Esophagus muscularis mucosa (tissue), 4 donors: ENCODE measurements at regions of chr2 and their contacts with region 1.

Region 1: GRCh38 chr2:169877398-169877797 is 50.1 kb downstream of the UBR3 start:
- DNase-seq: no peak
- H3K4me3 ChIP-seq: no peak overlapping the region
- H3K27ac ChIP-seq: no peak overlapping the region
- H3K4me1 ChIP-seq: no peaks in the 10 kb centered on the region
- H3K27me3 ChIP-seq: no peaks in the 10 kb centered on the region
- CTCF ChIP-seq: peak in 2 of 3 experiments; percentile 21 to 43
- EP300 ChIP-seq: no peak
- POLR2A ChIP-seq: no peak

Region 2: GRCh38 chr2:169824373-169825333 is 52.7 kb before region 1 on chr2 and contains the start of gene METTL5:
- intact Hi-C with region 1: loop called (anchors 10 kb)
- DNase-seq: peak; percentile 93
- H3K4me3 ChIP-seq: peak within 1 kb of the TSS; percentile 70 to 92 (median 76)
- H3K27ac ChIP-seq: peak within 1 kb of the TSS; percentile 79 to 89 (median 86)
- H3K4me1 ChIP-seq: peaks cover 35 to 58% (median 50%) of the 10 kb centered on the region in 4 donors
- H3K27me3 ChIP-seq: no peaks in the 10 kb centered on the region
- CTCF ChIP-seq: peak in 2 of 3 experiments; percentile 97
- EP300 ChIP-seq: no peak
- POLR2A ChIP-seq: peak; percentile 77
- total RNA-seq, gene METTL5: 66.2 to 104 (median 75.2) TPM